ENCODE measurements at regions of chr1 and their contacts with region 1.

Region 1: DNA sequence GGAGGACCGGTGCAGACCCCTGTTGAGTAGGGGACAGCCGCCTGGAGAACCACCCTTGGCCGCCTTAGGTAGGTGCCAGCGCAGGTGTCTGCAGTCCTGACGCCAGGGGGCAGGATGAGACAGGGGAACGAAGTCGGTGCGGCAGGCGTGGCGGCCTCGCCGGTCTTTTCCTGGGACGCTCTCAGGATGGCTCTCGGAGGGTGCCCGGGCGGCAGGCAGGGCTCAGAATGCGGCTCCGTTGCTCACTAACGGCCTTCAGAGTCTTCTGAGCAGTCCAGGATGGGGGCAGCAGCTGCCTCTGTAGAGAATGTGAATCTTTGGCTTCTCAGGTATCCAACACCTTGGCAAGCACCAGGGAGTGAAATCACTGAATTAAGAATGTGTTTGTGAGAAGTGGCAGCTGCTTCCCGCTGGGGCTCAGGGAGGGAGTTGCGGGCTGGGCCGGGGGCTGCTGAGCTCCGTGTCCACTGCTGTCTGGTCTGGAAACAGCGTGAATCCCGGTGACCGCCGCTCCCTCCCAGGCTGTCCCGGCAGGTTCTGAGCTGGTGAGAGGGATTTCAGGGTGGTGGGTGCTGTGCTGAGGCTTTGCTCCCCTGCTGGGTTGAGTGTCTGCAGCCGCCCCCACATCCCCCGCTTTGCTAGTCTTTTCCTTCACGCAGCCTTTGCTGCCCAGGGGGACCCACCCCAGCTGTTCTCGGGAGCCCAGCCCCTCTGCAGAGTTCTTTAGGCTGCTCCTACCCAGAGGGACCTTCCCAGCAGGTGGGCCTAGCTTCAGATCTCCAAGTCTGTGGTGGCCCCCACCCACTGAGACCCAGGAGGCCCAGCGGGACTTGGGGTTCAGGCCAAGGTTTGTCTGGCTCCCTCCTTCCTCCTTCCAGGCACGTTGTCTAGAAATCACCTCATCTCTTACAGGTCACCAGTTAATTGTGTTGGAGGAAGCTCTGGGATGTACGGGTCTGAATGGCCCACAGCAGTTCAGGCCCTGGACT is 11.1 kb upstream of the C1orf174 start:
- DNase-seq: peak; percentile 92
- H3K4me3 ChIP-seq: peak overlapping the region; percentile 83
- H3K27ac ChIP-seq: peak overlapping the region; percentile 100
- H3K4me1 ChIP-seq: peaks cover 62% of the 10 kb centered on the region
- CTCF ChIP-seq: peak; percentile 90

Region 2: DNA sequence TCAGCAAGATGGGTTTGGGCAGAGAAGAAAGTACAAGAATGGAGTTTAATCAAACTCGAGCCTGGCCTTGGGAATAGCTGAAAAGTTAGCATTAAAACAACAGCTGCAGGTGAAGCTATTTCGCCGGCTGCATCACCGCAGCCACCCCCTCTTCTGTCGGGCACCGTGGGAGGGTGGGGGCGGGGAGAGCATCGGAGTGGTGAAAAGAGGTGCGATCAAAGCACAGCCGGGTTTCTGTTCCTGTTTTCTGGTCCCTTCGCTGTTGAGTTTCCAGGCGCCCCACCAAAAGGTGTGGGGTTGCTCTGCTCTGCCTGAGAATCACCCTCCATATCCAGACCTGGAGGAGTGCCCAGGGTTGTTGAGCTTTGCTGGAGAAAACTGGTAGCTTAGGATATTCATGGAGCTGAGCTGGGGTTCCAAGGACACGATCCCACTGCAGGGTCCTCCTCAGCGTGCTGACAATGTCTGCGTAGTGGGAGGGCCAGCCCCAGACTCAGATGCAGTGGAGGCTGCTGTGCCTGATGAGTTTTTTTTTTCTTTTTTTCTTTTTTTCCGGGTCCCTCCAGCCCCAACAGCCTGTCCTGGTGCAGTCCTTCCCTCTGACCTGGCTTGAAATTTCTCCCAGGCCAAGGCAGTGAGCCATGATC is 116.5 kb after region 1 on chr1:
- CTCF ChIA-PET with region 1: interaction called, 3 read pairs
- POLR2A ChIA-PET with region 1: no interaction called
- intact Hi-C with region 1: loop called (anchors 5 kb)
- DNase-seq: peak; percentile 96
- H3K4me3 ChIP-seq: peak overlapping the region; percentile 55
- H3K27ac ChIP-seq: peak overlapping the region; percentile 96
- H3K4me1 ChIP-seq: peaks cover 75% of the 10 kb centered on the region
- CTCF ChIP-seq: no peak

Region 3: GRCh38 chr1:4087530-4088420 is 176.6 kb after region 1 on chr1:
- CTCF ChIA-PET with region 1: no interaction called
- POLR2A ChIA-PET with region 1: no interaction called
- intact Hi-C with region 1: loop called (anchors 1 kb)
- DNase-seq: no peak
- H3K4me3 ChIP-seq: no peak overlapping the region
- H3K27ac ChIP-seq: no peak overlapping the region
- H3K4me1 ChIP-seq: no peaks in the 10 kb centered on the region
- CTCF ChIP-seq: no peak

Region 4: GRCh38 chr1:4309676-4310320 is 398.6 kb after region 1 on chr1:
- CTCF ChIA-PET with region 1: no interaction called
- POLR2A ChIA-PET with region 1: interaction called, 6 read pairs
- intact Hi-C with region 1: loop called (anchors 2 kb)
- DNase-seq: peak; percentile 92
- H3K4me3 ChIP-seq: peak overlapping the region; percentile 38
- H3K27ac ChIP-seq: peak overlapping the region; percentile 65
- H3K4me1 ChIP-seq: peaks cover 54% of the 10 kb centered on the region
- CTCF ChIP-seq: no peak

Region 5: DNA sequence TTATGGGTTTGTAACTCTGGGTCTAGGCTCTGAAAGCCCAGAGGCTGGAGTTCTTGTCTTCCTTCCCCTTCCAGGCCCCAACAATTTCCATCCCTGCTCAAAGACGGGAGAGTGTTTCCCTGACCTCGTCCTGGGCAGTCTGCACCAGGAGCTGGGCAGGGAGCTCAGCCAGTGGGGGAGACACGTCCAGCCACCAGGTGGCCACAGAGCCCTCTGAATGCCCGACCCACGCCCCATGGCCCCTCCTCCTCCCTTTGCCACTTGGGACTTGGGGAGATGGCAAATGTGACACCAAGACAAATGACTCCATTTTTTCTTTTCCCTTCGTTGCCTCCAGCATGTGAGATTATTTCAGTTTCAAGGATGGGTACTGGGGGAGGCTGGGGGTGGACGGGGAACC is 583.4 kb after region 1 on chr1:
- CTCF ChIA-PET with region 1: no interaction called
- POLR2A ChIA-PET with region 1: no interaction called
- intact Hi-C with region 1: loop called (anchors 10 kb)
- DNase-seq: peak; percentile 37
- H3K4me3 ChIP-seq: no peak overlapping the region
- H3K27ac ChIP-seq: no peak overlapping the region
- H3K4me1 ChIP-seq: peaks cover 68% of the 10 kb centered on the region
- CTCF ChIP-seq: peak; percentile 45; the same call in 1 of the 2 replicates

Region 6: GRCh38 chr1:4652631-4653327 is 741.6 kb after region 1 on chr1:
- CTCF ChIA-PET with region 1: no interaction called
- POLR2A ChIA-PET with region 1: no interaction called
- intact Hi-C with region 1: loop called (anchors 5 kb)
- DNase-seq: peak; percentile 63
- H3K4me3 ChIP-seq: no peak overlapping the region
- H3K27ac ChIP-seq: no peak overlapping the region
- H3K4me1 ChIP-seq: peaks cover 27% of the 10 kb centered on the region
- CTCF ChIP-seq: peak; percentile 95

Measured in OCI-LY7 (cell line).